Activated CD8-positive, alpha-beta T cell treated with anti-CD3 and anti-CD28 coated beads for 36 hours (primary cell): ENCODE measurements at regions of chr2 and their contacts with region 1.

Region 1: GRCh38 chr2:25376750-25377621 is 35.3 kb upstream of the DNMT3A start:
- DNase-seq: peak; percentile 99
- ATAC-seq: peak; percentile 97
- H3K4me3 Mint-ChIP-seq: peak overlapping the region; percentile 79
- H3K27ac Mint-ChIP-seq: peak overlapping the region; percentile 97
- H3K4me1 Mint-ChIP-seq: peaks cover 42% of the 10 kb centered on the region
- H3K27me3 Mint-ChIP-seq: no peaks in the 10 kb centered on the region
- CTCF ChIP-seq: peak; percentile 95

Region 2: GRCh38 chr2:25309402-25309801 is 67.6 kb before region 1 on chr2:
- CTCF ChIA-PET with region 1: interaction called, 22 read pairs
- POLR2A ChIA-PET with region 1: interaction called, 6 read pairs
- intact Hi-C with region 1: no loop called
- DNase-seq: peak; percentile 81
- ATAC-seq: peak; percentile 18
- H3K4me3 Mint-ChIP-seq: no peak overlapping the region
- H3K27ac Mint-ChIP-seq: peak overlapping the region; percentile 71
- H3K4me1 Mint-ChIP-seq: peaks cover 77% of the 10 kb centered on the region
- H3K27me3 Mint-ChIP-seq: no peaks in the 10 kb centered on the region
- CTCF ChIP-seq: peak; percentile 50

Region 3: GRCh38 chr2:25323042-25323514 is 53.9 kb before region 1 on chr2:
- CTCF ChIA-PET with region 1: interaction called, 11 read pairs
- POLR2A ChIA-PET with region 1: interaction called, 6 read pairs
- intact Hi-C with region 1: no loop called
- DNase-seq: peak; percentile 87
- ATAC-seq: peak; percentile 75
- H3K4me3 Mint-ChIP-seq: peak overlapping the region; percentile 65
- H3K27ac Mint-ChIP-seq: peak overlapping the region; percentile 97
- H3K4me1 Mint-ChIP-seq: peaks cover 64% of the 10 kb centered on the region
- H3K27me3 Mint-ChIP-seq: no peaks in the 10 kb centered on the region
- CTCF ChIP-seq: no peak

Region 4: GRCh38 chr2:25342372-25343186 is 34.4 kb before region 1 on chr2:
- CTCF ChIA-PET with region 1: interaction called, 14 read pairs
- POLR2A ChIA-PET with region 1: interaction called, 12 read pairs
- intact Hi-C with region 1: loop called (anchors 5 kb)
- DNase-seq: peak; percentile 88
- ATAC-seq: peak; percentile 84
- H3K4me3 Mint-ChIP-seq: peak overlapping the region; percentile 76
- H3K27ac Mint-ChIP-seq: peak overlapping the region; percentile 80
- H3K4me1 Mint-ChIP-seq: peaks cover 54% of the 10 kb centered on the region
- H3K27me3 Mint-ChIP-seq: no peaks in the 10 kb centered on the region
- CTCF ChIP-seq: peak; percentile 97

Region 5: GRCh38 chr2:25402477-25402876 is 25.5 kb after region 1 on chr2:
- CTCF ChIA-PET with region 1: interaction called, 4 read pairs
- POLR2A ChIA-PET with region 1: interaction called, 11 read pairs
- intact Hi-C with region 1: no loop called
- DNase-seq: peak; percentile 64
- ATAC-seq: peak; percentile 72
- H3K4me3 Mint-ChIP-seq: no peak overlapping the region
- H3K27ac Mint-ChIP-seq: peak overlapping the region; percentile 76
- H3K4me1 Mint-ChIP-seq: peaks cover 26% of the 10 kb centered on the region
- H3K27me3 Mint-ChIP-seq: no peaks in the 10 kb centered on the region
- CTCF ChIP-seq: no peak

Region 6: GRCh38 chr2:25419678-25420242 is 42.8 kb after region 1 on chr2:
- CTCF ChIA-PET with region 1: no interaction called
- POLR2A ChIA-PET with region 1: no interaction called
- intact Hi-C with region 1: no loop called
- DNase-seq: peak; percentile 14
- ATAC-seq: peak; percentile 49
- H3K4me3 Mint-ChIP-seq: no peak overlapping the region
- H3K27ac Mint-ChIP-seq: peak overlapping the region; percentile 6
- H3K4me1 Mint-ChIP-seq: peaks cover 14% of the 10 kb centered on the region
- H3K27me3 Mint-ChIP-seq: no peaks in the 10 kb centered on the region
- CTCF ChIP-seq: no peak